GM23248 (cell line): ENCODE measurements at regions of chr10 and their contacts with region 1.

Region 1: GRCh38 chr10:3239066-3239919 is 66.7 kb upstream of the PITRM1 start:
- DNase-seq: peak; percentile 78
- H3K4me3 ChIP-seq: no peak overlapping the region
- H3K27ac ChIP-seq: no peak overlapping the region
- H3K4me1 ChIP-seq: no peaks in the 10 kb centered on the region
- H3K27me3 ChIP-seq: no peaks in the 10 kb centered on the region

Region 2: DNA sequence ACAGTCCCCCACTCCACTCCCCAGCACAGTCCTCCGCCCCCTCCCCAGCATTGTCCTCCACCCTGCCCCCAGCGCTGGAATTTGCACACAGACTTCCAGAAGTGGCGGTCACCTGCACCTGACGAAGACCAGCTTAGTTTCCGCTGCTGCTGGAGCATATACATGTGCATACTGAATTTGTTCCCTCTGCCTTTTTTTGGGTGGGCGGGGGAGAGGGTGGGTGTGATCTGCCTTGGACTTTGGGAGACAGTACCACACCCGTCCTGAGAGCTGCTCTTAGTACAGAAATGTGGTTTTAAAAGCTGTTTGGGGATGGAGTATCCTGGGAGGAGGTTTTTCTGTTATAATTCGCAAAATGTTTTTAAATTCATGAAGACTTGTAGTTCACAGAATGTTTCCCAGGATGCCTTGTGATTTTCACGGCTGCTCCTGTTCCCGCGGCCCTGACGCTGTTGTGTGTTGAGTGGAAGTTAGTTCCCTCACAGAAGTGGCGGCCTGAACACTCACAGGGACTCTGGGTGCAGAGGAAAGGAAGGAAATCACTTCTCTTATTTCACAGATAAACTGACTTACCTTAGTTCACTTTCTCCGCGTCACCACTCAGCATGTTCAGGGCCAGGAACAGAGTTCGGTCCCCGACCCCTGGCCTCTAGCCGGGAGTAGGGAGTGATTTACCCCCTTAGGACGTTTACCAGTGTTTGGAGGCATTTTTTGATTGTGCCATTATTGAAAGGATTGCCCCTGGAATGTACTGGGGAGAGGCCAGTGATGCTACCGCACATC is 153.3 kb before region 1 on chr10:
- in situ Hi-C with region 1: no loop called
- DNase-seq: no peak
- H3K4me3 ChIP-seq: no peak overlapping the region
- H3K27ac ChIP-seq: no peak overlapping the region
- H3K4me1 ChIP-seq: peaks cover 6% of the 10 kb centered on the region
- H3K27me3 ChIP-seq: no peaks in the 10 kb centered on the region

Region 3: DNA sequence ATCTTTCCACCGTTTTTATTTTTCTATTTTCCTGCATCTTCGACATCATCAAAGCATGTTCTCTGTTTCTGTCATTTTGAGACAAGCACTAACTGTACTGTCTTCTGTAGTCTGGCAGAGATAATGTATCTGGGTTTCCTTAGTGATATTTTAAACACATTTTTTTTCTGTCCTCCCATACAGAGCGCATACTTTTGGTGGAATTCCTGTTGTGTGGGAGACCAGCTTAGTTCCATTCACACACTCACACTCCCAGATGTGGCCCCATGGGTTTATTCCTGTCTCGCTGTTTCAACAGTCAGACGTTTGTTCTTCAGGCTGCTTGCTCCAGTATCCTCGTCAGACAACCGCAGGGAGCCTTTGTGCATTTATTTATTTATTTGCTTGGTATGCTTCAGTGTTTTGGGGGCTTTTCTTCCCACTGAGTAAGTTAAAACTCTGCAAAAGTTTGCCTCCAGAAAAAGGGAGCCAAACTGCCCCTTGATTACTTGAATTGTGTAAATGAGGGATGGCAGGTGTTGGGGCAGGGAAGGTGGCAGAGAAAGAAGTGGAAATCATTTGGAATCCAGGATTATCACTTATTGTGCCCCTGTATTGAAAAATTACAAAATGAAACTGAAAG is 1002.5 kb after region 1 on chr10:
- in situ Hi-C with region 1: loop called (anchors 25 kb)
- DNase-seq: peak; percentile 96
- H3K4me3 ChIP-seq: peak overlapping the region; percentile 74
- H3K27ac ChIP-seq: peak overlapping the region; percentile 99
- H3K4me1 ChIP-seq: peaks cover 68% of the 10 kb centered on the region
- H3K27me3 ChIP-seq: no peaks in the 10 kb centered on the region

Region 4: DNA sequence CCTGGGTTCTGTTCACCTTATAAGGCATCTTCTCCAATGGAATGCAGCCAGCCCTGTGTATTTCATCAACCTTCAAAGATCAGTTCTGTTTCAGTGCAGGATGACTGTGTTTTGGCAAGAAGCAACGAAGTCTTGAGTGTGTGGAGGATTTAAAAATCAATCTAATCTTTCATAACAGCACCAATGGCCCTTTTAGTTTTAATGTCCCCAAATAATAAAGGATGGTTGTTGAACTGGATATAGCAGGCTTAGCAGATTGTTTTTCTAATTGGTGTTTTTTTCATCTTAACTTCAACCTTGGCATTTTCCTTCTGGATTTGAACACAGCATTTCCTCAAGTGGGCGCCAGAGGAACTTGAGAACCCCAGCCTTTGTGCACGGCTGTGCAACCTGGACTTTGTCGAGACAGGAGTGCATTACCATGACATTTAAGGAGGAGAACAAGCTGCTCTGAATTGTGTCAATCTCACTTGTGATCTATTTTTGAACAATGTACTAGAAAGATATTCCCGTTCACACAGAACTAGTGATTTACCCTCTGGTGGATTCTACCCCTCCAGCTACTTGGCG is 1273.5 kb after region 1 on chr10:
- in situ Hi-C with region 1: loop called (anchors 25 kb)
- DNase-seq: peak; percentile 84
- H3K4me3 ChIP-seq: 0 out of 2 replicates have a peak overlapping the region, but pooled peaks have one; percentile 5
- H3K27ac ChIP-seq: peak overlapping the region; percentile 10; the same call in 1 of the 2 replicates
- H3K4me1 ChIP-seq: peaks cover 30% of the 10 kb centered on the region
- H3K27me3 ChIP-seq: no peaks in the 10 kb centered on the region

Region 5: GRCh38 chr10:4663162-4663904 is 1424.0 kb after region 1 on chr10:
- in situ Hi-C with region 1: loop called (anchors 25 kb)
- DNase-seq: peak; percentile 99
- H3K4me3 ChIP-seq: peak overlapping the region; percentile 66
- H3K27ac ChIP-seq: peak overlapping the region; percentile 100
- H3K4me1 ChIP-seq: peaks cover 39% of the 10 kb centered on the region
- H3K27me3 ChIP-seq: no peaks in the 10 kb centered on the region